Naive thymus-derived CD4-positive, alpha-beta T cell (primary cell): ENCODE measurements at regions of chr5 and their contacts with region 1.

Region 1: DNA sequence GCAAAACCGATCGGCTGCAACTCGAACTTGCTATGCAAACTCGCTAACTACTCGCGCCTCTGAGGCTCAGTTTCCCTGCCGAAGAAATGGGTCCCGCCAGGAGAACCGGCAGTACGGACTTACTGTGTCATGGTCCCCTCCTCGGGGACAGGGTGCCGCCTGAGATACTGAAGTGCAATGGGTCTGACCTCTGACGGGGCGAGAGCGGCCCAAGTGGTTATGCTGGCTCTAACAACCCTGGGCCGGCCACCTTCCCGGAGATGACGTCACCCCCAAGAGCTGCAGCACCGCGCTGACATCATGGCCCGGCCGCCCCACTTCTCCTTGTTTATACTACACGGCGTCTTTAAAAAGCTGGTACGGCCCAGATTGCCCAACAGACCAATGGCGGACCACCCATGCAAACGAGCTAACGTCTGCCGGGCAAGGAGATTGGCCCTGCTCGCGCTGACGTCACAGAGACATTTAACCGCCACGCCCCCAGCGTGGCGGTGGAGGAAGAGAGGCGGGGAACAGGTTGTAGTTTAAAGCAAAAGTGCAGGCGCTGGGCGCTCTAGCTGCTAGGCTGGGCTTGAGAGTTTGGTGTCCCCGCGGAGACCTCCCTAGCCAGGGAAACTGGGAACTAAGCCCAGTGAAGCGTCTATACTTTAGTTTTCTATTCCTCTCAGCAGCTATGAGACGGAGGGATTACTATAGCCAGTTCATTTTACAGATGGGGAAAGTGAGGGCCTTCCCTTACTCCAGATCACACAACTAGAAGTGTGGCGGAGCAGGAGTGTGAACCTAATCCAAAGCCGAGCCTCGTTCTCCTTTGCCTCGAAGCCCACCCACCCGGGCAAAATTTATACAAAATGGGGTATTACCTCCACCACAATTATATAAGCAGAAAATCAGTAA is 654 bp upstream of the RNF44 start:
- DNase-seq: peak; percentile 80 to 99 (median 96)
- ATAC-seq: peak; percentile 83
- H3K4me3 ChIP-seq: peak overlapping the region; percentile 100
- H3K4me3 Mint-ChIP-seq: peak overlapping the region; percentile 96 to 100 (median 99)
- H3K27ac ChIP-seq: peak overlapping the region; percentile 96
- H3K27ac Mint-ChIP-seq: peak overlapping the region; percentile 99 to 100 (median 99)
- H3K4me1 ChIP-seq: peaks cover 57 to 63% of the 10 kb centered on the region in 2 donors
- H3K4me1 Mint-ChIP-seq: peaks cover 55 to 74% (median 71%) of the 10 kb centered on the region in 7 donors
- H3K27me3 ChIP-seq: no peaks in the 10 kb centered on the region
- H3K27me3 Mint-ChIP-seq: no peaks in the 10 kb centered on the region

Region 2: DNA sequence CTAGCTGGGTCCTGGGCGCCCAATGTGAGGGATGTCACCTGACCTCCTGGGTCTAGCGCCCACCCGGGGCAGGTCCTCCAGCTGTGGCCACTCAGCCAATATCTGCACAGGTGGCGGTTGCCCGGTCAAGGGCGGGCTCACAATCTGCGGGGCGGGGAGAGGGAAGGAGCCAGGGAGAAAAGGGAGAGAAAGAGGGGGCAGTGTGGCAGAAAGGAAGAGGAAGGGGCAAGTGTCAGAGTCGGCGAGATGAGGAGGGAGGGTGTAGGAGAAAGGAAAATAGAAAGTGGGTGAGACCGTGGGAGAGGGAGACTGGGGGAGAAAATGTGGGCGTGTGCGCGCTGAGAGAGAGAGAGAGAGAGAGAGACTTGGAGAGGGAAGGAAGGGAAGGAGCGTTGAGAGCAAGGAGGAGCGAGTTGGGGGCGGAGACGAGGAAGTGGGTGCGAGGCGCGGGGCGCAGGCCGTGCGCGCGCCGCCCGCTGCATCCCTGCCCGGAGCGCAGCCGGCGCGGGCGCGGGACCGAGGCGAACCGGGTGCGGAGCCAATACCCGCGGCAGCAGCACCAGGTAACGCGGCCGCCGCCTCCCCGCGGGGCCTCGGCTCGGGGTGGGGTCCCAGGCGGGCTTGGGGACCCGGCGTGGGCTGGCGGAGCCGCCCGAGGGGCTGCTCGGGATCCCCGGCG is 880.1 kb before region 1 on chr5 and contains the start of gene HRH2:
- CTCF ChIA-PET with region 1: no interaction called
- POLR2A ChIA-PET with region 1: no interaction called
- intact Hi-C with region 1: loop called (anchors 5 to 10 kb)
- DNase-seq: peak; percentile 20 to 69 (median 46)
- ATAC-seq: peak; percentile 71
- H3K4me3 ChIP-seq: peak within 1 kb of the TSS; percentile 70
- H3K4me3 Mint-ChIP-seq: peak within 1 kb of the TSS; percentile 84 to 100 (median 96)
- H3K27ac ChIP-seq: peak within 1 kb of the TSS; percentile 71
- H3K27ac Mint-ChIP-seq: peak within 1 kb of the TSS; percentile 80 to 94 (median 88)
- H3K4me1 ChIP-seq: peaks cover 41 to 59% of the 10 kb centered on the region in 2 donors
- H3K4me1 Mint-ChIP-seq: peaks cover 77 to 98% (median 92%) of the 10 kb centered on the region in 7 donors
- H3K27me3 ChIP-seq: no peaks in the 10 kb centered on the region
- H3K27me3 Mint-ChIP-seq: peaks cover 0 to 2% (median 0%) of the 10 kb centered on the region in 5 donors
- total RNA-seq, gene HRH2: 5.6 to 26.3 (median 12.9) TPM

Region 3: DNA sequence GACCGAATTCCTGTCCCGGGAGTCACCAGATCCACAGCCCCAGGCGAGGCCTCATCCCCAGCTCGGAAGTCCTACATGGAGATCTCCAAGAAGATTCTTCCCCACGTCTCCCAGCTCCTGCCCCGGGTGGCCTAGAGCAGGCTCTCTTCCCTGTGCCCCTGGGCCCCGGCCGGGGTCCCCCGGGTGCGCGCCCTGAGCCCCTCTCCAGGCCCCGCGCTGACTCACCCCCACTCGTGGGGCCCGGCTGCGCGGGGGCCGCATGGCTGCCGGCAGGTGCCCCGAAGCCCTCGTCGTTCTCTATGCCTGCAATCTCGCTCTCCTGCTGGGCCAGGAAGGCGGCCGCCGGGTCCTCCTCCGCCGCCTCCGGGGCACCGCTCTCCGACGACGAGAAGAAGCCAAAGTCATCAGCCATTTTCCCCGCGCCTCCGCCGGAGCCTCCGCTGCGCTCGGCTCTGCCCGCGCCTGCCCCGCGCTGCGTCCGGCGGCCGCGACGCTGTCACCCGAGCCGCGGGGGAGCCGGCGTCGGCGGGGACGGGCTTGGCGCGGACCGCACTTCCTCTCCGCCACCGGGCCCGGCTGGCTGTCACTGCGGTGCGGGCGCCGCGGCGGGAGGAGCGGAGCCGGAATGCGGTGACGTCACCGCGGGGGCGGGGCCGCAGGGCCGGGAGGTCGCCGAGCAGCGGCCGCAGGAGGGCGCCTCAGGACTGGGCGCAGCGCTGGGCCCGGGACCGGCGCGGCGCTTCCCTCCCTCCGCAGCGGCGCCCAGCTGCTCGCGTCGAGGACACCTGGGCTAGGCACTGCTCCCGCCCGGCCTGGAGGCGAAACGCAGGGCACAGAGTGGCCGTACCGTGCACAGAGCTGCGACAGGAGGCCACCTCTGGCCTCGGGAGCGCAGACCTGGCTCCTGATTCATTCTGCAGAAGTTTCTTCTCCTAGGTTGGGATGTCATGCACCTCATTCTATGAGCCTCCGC is 121.6 kb before region 1 on chr5 and contains the start of gene CLTB:
- CTCF ChIA-PET with region 1: interaction called, 15 read pairs
- POLR2A ChIA-PET with region 1: interaction called, 15 read pairs
- intact Hi-C with region 1: loop called (anchors 1 to 2 kb)
- DNase-seq: peak; percentile 73 to 86 (median 84)
- ATAC-seq: peak; percentile 97
- H3K4me3 ChIP-seq: peak within 1 kb of the TSS; percentile 52
- H3K4me3 Mint-ChIP-seq: peak within 1 kb of the TSS; percentile 74 to 89 (median 84)
- H3K27ac ChIP-seq: peak within 1 kb of the TSS; percentile 86
- H3K27ac Mint-ChIP-seq: peak within 1 kb of the TSS; percentile 71 to 91 (median 87)
- H3K4me1 ChIP-seq: peaks cover 21 to 28% of the 10 kb centered on the region in 2 donors
- H3K4me1 Mint-ChIP-seq: peaks cover 17 to 53% (median 47%) of the 10 kb centered on the region in 7 donors
- H3K27me3 ChIP-seq: no peaks in the 10 kb centered on the region
- H3K27me3 Mint-ChIP-seq: peaks cover 0 to 19% (median 0%) of the 10 kb centered on the region in 5 donors
- total RNA-seq, gene CLTB: 30.6 to 67.2 (median 63.8) TPM

Region 4: GRCh38 chr5:176466245-176466871 is 71.5 kb before region 1 on chr5:
- CTCF ChIA-PET with region 1: no interaction called
- POLR2A ChIA-PET with region 1: no interaction called
- intact Hi-C with region 1: no loop called
- DNase-seq: no peak
- ATAC-seq: peak; percentile 47
- H3K4me3 ChIP-seq: no peak overlapping the region
- H3K4me3 Mint-ChIP-seq: no peak overlapping the region
- H3K27ac ChIP-seq: no peak overlapping the region
- H3K27ac Mint-ChIP-seq: peak overlapping the region in 2 of 9 donors; percentile 26 to 70
- H3K4me1 ChIP-seq: no peaks in the 10 kb centered on the region
- H3K4me1 Mint-ChIP-seq: peaks cover 14 to 52% (median 43%) of the 10 kb centered on the region in 7 donors
- H3K27me3 ChIP-seq: no peaks in the 10 kb centered on the region
- H3K27me3 Mint-ChIP-seq: no peaks in the 10 kb centered on the region

Region 5: GRCh38 chr5:176519810-176520720 is 17.8 kb before region 1 on chr5:
- CTCF ChIA-PET with region 1: interaction called, 3 read pairs
- POLR2A ChIA-PET with region 1: interaction called, 251 read pairs
- intact Hi-C with region 1: no loop called
- DNase-seq: no peak
- ATAC-seq: no peak
- H3K4me3 ChIP-seq: no peak overlapping the region
- H3K4me3 Mint-ChIP-seq: peak overlapping the region in 1 of 10 donors; percentile 56
- H3K27ac ChIP-seq: no peak overlapping the region
- H3K27ac Mint-ChIP-seq: peak overlapping the region in 3 of 9 donors; percentile 11 to 62 (median 17)
- H3K4me1 ChIP-seq: peaks cover 0 to 9% of the 10 kb centered on the region in 2 donors
- H3K4me1 Mint-ChIP-seq: peaks cover 13 to 44% (median 32%) of the 10 kb centered on the region in 7 donors
- H3K27me3 ChIP-seq: no peaks in the 10 kb centered on the region
- H3K27me3 Mint-ChIP-seq: no peaks in the 10 kb centered on the region

Region 6: GRCh38 chr5:176590035-176590717 is 52.3 kb after region 1 on chr5:
- CTCF ChIA-PET with region 1: no interaction called
- POLR2A ChIA-PET with region 1: no interaction called
- intact Hi-C with region 1: no loop called
- DNase-seq: no peak
- ATAC-seq: no peak
- H3K4me3 ChIP-seq: no peak overlapping the region
- H3K4me3 Mint-ChIP-seq: no peak overlapping the region
- H3K27ac ChIP-seq: no peak overlapping the region
- H3K27ac Mint-ChIP-seq: no peak overlapping the region
- H3K4me1 ChIP-seq: no peaks in the 10 kb centered on the region
- H3K4me1 Mint-ChIP-seq: no peaks in the 10 kb centered on the region
- H3K27me3 ChIP-seq: no peaks in the 10 kb centered on the region
- H3K27me3 Mint-ChIP-seq: no peaks in the 10 kb centered on the region

Region 7: DNA sequence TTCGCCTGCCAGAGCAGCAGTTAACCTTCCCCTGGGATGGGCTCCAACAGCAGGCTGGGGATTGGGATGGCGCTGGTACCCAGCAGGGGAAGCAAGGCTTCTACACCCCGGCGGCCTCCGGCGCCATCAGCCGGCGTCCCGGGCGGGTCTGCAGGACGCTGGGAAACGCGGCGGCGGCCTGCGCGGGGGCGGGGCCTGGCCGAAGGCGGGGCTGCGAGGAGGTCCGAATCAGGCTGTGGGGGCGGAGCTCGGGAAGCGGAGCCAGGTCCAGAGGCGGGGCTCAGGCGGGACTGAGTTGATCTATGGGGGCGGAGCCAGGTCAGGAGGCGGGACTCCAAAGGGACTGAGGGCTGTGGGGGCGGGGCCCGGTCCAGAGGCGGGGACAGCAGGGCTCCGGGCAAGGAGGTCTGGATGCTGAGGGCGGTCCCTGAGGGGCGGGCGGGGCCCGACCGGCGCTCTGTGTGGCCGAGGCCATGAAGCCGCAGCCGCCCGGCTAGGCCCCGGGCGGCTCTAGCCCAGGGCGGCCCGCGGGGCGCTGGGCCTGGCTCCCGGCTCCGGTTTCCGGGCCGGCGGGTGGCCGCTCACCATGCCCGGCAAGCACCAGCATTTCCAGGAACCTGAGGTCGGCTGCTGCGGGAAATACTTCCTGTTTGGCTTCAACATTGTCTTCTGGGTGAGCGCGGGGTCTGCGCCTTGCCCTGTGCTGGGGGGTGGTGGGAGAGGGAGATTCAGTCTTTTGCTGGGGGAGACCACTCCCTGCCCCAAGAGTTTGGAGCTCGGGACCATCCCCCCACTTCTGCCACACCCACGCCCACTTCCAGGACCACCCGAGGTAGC is 109.4 kb after region 1 on chr5 and contains the start of gene TSPAN17:
- CTCF ChIA-PET with region 1: no interaction called
- POLR2A ChIA-PET with region 1: interaction called, 10 read pairs
- intact Hi-C with region 1: loop called (anchors 1 kb)
- DNase-seq: peak; percentile 87 to 99 (median 89)
- ATAC-seq: peak; percentile 97
- H3K4me3 ChIP-seq: peak within 1 kb of the TSS; percentile 50
- H3K4me3 Mint-ChIP-seq: peak within 1 kb of the TSS; percentile 79 to 94 (median 89)
- H3K27ac ChIP-seq: peak within 1 kb of the TSS; percentile 68
- H3K27ac Mint-ChIP-seq: peak within 1 kb of the TSS; percentile 79 to 95 (median 90)
- H3K4me1 ChIP-seq: peaks cover 21 to 28% of the 10 kb centered on the region in 2 donors
- H3K4me1 Mint-ChIP-seq: peaks cover 29 to 55% (median 45%) of the 10 kb centered on the region in 7 donors
- H3K27me3 ChIP-seq: no peaks in the 10 kb centered on the region
- H3K27me3 Mint-ChIP-seq: no peaks in the 10 kb centered on the region
- total RNA-seq, gene TSPAN17: 16.6 to 47.6 (median 21.1) TPM

Region 8: DNA sequence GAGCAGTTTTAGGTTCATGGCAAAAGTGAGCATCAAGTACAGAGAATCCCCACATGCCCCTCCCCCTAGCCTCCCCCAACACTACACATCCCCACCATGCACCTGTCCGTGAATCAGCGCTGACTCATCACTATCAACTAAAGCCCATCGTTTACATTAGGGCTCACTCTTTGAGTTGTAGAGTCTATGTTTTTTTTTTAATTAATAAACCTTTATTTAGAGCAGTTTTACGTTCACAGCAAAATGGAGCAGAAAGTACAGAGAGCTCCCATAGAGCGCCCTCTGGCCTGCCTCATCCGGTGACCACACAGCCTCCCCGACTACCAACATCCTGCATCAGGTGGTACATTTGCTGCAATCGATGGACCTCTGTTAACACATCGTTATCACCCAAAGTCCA is 224.6 kb after region 1 on chr5:
- CTCF ChIA-PET with region 1: no interaction called
- POLR2A ChIA-PET with region 1: no interaction called
- intact Hi-C with region 1: no loop called
- DNase-seq: no peak
- ATAC-seq: no peak
- H3K4me3 ChIP-seq: no peak overlapping the region
- H3K4me3 Mint-ChIP-seq: no peak overlapping the region
- H3K27ac ChIP-seq: no peak overlapping the region
- H3K27ac Mint-ChIP-seq: no peak overlapping the region
- H3K4me1 ChIP-seq: no peaks in the 10 kb centered on the region
- H3K4me1 Mint-ChIP-seq: no peaks in the 10 kb centered on the region
- H3K27me3 ChIP-seq: no peaks in the 10 kb centered on the region
- H3K27me3 Mint-ChIP-seq: peaks cover 25 to 53% (median 45%) of the 10 kb centered on the region in 5 donors

Region 9: GRCh38 chr5:177133091-177133852 is 595.4 kb after region 1 on chr5 and contains the start of gene NSD1:
- CTCF ChIA-PET with region 1: no interaction called
- POLR2A ChIA-PET with region 1: no interaction called
- intact Hi-C with region 1: loop called in 1 of 2 experiments (anchors 5 kb)
- DNase-seq: peak; percentile 86 to 94 (median 93)
- ATAC-seq: peak; percentile 89
- H3K4me3 ChIP-seq: peak within 1 kb of the TSS; percentile 61
- H3K4me3 Mint-ChIP-seq: peak within 1 kb of the TSS; percentile 60 to 88 (median 85)
- H3K27ac ChIP-seq: peak within 1 kb of the TSS; percentile 80
- H3K27ac Mint-ChIP-seq: peak within 1 kb of the TSS; percentile 48 to 95 (median 89)
- H3K4me1 ChIP-seq: peaks cover 47 to 57% of the 10 kb centered on the region in 2 donors
- H3K4me1 Mint-ChIP-seq: peaks cover 34 to 72% (median 65%) of the 10 kb centered on the region in 7 donors
- H3K27me3 ChIP-seq: no peaks in the 10 kb centered on the region
- H3K27me3 Mint-ChIP-seq: no peaks in the 10 kb centered on the region
- total RNA-seq, gene NSD1: 105 to 126 (median 117) TPM

Region 10: GRCh38 chr5:177425801-177426565 is 888.1 kb after region 1 on chr5:
- CTCF ChIA-PET with region 1: no interaction called
- POLR2A ChIA-PET with region 1: interaction called, 3 read pairs
- intact Hi-C with region 1: loop called (anchors 2 to 5 kb)
- DNase-seq: peak; percentile 89 to 100 (median 100)
- ATAC-seq: peak; percentile 89
- H3K4me3 ChIP-seq: peak overlapping the region; percentile 67
- H3K4me3 Mint-ChIP-seq: peak overlapping the region; percentile 87 to 96 (median 90)
- H3K27ac ChIP-seq: peak overlapping the region; percentile 82
- H3K27ac Mint-ChIP-seq: peak overlapping the region; percentile 92 to 98 (median 96)
- H3K4me1 ChIP-seq: peaks cover 27 to 36% of the 10 kb centered on the region in 2 donors
- H3K4me1 Mint-ChIP-seq: peaks cover 33 to 54% (median 38%) of the 10 kb centered on the region in 7 donors
- H3K27me3 ChIP-seq: no peaks in the 10 kb centered on the region
- H3K27me3 Mint-ChIP-seq: peaks cover 0 to 3% (median 0%) of the 10 kb centered on the region in 5 donors